ENCODE measurements at regions of chr7 and their contacts with region 1.

Region 1: DNA sequence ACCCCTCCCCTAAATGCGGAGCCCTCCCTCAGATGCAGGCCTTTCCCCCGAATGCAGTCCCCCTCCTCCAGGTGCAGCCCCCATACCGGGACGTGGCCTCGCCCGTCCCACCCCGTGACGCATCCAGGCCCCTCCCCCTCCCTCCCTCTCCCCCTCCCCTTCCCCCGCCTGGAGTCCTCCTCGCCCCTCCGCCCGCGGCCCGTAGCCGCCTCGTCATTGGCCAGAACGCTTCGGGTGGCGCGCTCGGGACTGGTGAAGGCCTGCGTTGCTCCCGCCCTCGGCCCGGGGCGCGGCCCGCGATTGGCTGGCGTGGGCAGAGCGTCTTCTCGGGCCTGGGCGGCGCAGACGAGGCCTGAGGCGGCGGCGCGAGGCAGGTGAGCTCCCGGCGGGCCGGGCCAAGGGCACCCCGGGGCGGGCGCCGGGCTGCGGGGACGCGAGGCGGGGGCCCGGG is 16.0 kb upstream of the SUN1 start:
- DNase-seq: peak; percentile 98
- ATAC-seq: peak; percentile 87
- H3K4me3 ChIP-seq: peak overlapping the region; percentile 84
- H3K27ac ChIP-seq: no peak overlapping the region
- H3K4me1 ChIP-seq: peaks cover 40% of the 10 kb centered on the region
- H3K27me3 ChIP-seq: no peaks in the 10 kb centered on the region
- CTCF ChIP-seq: no peak

Region 2: GRCh38 chr7:786472-787255 is 29.7 kb before region 1 on chr7:
- CTCF ChIA-PET with region 1: interaction called, 16 read pairs
- POLR2A ChIA-PET with region 1: no interaction called
- intact Hi-C with region 1: loop called (anchors 2 kb)
- DNase-seq: peak; percentile 71
- ATAC-seq: peak; percentile 85
- H3K4me3 ChIP-seq: no peak overlapping the region
- H3K27ac ChIP-seq: no peak overlapping the region
- H3K4me1 ChIP-seq: no peaks in the 10 kb centered on the region
- H3K27me3 ChIP-seq: no peaks in the 10 kb centered on the region
- CTCF ChIP-seq: peak; percentile 88

Measured in PC-3 (cell line).